ENCODE measurements at regions of chr12 and their contacts with region 1.

Region 1: DNA sequence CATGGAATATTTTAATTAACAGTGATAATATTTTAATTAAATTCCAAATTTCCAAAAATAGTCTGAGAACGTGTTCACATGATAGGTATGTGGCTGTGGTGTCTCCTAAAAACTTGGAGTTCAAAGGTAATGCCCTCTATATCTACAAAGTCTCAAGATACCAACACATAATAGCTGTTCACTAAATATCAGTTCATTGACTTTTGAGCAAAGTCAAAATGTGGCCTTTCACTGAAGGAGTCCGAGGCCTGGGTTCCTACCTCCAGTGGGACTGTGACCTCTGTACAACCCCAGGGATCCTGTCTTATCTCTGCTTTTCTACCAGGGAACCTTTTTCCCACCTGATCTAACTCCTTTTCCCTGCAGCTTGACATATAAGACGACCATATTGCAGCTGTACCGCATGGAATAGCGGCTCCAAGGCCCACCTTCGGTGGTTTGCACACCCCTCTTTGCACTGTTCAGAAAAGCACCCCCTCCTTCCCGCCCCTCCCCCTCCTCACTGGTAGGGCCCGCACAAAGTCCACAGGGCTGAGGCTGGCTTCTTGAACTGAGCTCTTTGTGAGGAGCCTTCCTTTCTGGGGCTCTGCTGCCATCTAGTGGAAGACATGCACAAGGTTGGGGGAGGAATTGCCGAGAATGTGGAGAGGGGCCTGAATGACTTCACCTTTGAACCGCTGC is 3.1 kb downstream of the CCND2 start:
- DNase-seq: peak; percentile 90 to 96 (median 92)
- H3K4me3 ChIP-seq: peak overlapping the region in 2 of 4 donors; percentile 85 to 96
- H3K27ac ChIP-seq: peak overlapping the region in 4 of 5 donors; percentile 83 to 95 (median 91)
- H3K4me1 ChIP-seq: peaks cover 65 to 68% of the 10 kb centered on the region in 2 donors
- H3K27me3 ChIP-seq: no peaks in the 10 kb centered on the region
- CTCF ChIP-seq: peak; percentile 84 to 97 (median 94)
- POLR2A ChIP-seq: peak; percentile 22 to 35

Region 2: GRCh38 chr12:3998968-3999826 is 277.5 kb before region 1 on chr12:
- intact Hi-C with region 1: loop called in 1 of 2 experiments (anchors 10 kb)
- DNase-seq: peak in 1 of 7 donors; percentile 57
- H3K4me3 ChIP-seq: no peak overlapping the region
- H3K27ac ChIP-seq: no peak overlapping the region
- H3K4me1 ChIP-seq: no peaks in the 10 kb centered on the region
- H3K27me3 ChIP-seq: no peaks in the 10 kb centered on the region
- CTCF ChIP-seq: no peak
- POLR2A ChIP-seq: no peak

Region 3: GRCh38 chr12:4030929-4031702 is 245.5 kb before region 1 on chr12:
- intact Hi-C with region 1: loop called (anchors 5 to 10 kb)
- DNase-seq: peak; percentile 91 to 97 (median 96)
- H3K4me3 ChIP-seq: peak overlapping the region in 2 of 4 donors; percentile 23 to 59
- H3K27ac ChIP-seq: peak overlapping the region; percentile 1 to 99 (median 90)
- H3K4me1 ChIP-seq: peaks cover 22 to 30% of the 10 kb centered on the region in 2 donors
- H3K27me3 ChIP-seq: no peaks in the 10 kb centered on the region
- CTCF ChIP-seq: peak in 1 of 6 experiments; percentile 20
- POLR2A ChIP-seq: peak; percentile 58 to 81

Region 4: DNA sequence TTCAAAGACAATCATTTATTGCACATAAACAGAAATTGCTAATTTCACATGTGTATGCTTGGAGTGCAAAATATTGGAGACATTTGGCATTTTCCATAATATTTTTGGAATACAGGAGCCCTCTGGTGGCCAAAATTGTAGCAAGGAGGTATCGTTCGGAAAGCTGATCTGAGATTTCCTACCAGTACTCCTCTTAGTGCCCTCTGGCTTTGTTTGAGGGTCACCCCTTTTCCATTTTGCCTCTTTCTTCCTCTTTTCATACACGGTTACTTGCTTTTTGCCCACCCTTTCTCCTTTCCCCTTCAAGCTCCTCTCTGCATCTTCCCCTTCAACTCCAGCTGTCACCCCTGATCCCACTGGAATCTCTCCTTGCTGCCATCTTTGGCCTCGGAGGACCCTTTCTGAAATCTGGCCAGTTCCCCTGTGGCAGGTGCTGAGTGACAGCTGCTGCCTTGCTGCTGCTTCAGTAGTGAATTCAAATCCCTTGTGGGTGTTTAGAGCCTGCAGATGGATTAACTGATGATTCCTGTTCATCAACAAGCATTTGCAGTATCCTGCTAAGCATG is 238.8 kb before region 1 on chr12:
- intact Hi-C with region 1: loop called (anchors 5 to 10 kb)
- DNase-seq: peak; percentile 48 to 85 (median 72)
- H3K4me3 ChIP-seq: no peak overlapping the region
- H3K27ac ChIP-seq: no peak overlapping the region
- H3K4me1 ChIP-seq: peaks cover 9 to 12% of the 10 kb centered on the region in 2 donors
- H3K27me3 ChIP-seq: no peaks in the 10 kb centered on the region
- CTCF ChIP-seq: peak; percentile 56 to 91 (median 86)
- POLR2A ChIP-seq: no peak

Region 5: DNA sequence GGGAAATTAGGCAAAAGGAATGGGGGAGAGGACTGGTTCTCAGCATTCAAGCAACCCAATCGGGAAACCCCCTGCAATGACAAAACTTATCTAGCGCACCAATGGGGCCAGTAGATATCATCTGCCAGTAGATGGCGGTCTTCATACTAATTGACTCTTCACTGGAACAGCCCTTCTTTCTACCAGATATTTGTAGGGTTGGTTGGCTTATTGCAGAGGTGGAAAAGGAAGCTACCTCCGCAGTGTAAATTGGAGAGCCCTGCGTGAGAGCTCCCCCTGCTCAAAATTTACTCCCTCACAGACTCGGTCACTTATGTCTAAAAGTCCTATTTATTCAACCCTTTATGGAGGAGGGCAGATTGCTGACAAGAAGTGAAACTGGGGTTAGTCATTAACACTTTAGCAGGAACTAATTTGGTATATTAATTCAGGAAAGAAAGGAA is 169.2 kb before region 1 on chr12:
- intact Hi-C with region 1: loop called (anchors 5 kb)
- DNase-seq: peak; percentile 55 to 83 (median 65)
- H3K4me3 ChIP-seq: no peak overlapping the region
- H3K27ac ChIP-seq: no peak overlapping the region
- H3K4me1 ChIP-seq: no peaks in the 10 kb centered on the region
- H3K27me3 ChIP-seq: peaks cover 13% of the 10 kb centered on the region
- CTCF ChIP-seq: peak; percentile 67 to 74 (median 72)
- POLR2A ChIP-seq: no peak

Region 6: DNA sequence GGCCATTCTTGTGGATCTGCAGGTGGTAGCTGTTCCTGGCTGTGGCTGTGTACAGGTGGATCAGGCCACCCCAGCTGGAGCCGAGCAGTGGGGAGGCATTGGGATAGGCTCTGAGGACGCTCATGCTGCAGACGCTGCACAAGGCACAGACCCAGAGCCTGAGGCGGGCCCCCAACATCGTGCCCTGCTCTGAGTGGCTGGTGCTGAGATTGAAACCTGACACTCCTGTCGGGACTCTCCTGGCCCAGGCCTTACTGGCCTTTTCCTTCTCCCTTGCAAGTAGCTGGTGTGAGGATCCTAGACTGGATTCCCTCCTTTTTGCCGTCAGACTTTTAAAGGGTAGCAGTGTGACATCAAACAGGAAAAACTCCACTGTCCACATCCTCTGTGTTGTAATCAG is 102.7 kb after region 1 on chr12 and contains the start of gene FGF23:
- intact Hi-C with region 1: no loop called
- DNase-seq: no peak
- H3K4me3 ChIP-seq: no peak within 1 kb of the TSS
- H3K27ac ChIP-seq: no peak within 1 kb of the TSS
- H3K4me1 ChIP-seq: no peaks in the 10 kb centered on the region
- H3K27me3 ChIP-seq: no peaks in the 10 kb centered on the region
- CTCF ChIP-seq: no peak
- POLR2A ChIP-seq: no peak
- total RNA-seq, gene FGF23: 0.58 TPM in 1 of 9 donors, not detected in the others